ENCODE measurements at regions of chr20 and their contacts with region 1.

Region 1: DNA sequence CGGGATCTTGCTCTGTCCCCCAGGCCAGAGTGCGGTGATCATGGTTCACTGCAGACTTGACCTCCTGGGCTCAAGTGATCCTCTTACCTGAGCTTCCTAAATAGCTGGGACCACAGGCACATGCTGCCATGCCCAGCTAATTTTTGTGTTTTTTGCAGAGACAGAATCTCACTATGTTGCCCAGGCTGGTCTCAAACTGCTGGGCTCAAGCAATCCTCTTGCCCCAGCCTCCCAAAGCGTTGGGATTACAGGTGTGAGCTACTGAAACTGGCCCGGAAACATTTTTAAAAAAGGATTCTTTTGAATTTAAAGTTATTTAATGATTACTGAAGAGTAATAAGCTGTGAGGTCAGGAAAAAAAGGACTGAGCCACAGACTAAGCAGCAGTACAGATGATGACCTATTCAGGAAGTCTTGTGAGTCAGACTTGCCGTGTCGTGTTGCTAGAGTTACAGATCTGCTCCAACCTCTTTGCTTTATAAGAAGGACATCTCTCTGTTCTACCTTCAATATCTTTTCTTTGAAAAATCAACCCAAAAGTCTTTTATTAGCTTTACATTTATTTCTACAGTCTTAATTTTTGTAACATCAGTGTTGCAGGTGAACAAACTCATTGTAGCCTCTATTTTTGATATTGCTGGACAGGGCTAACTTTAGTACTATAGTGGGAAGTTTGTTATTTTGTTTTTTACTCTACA is 108.7 kb downstream of the NCOA3 start:
- DNase-seq: peak; percentile 67
- H3K4me3 Mint-ChIP-seq: no peak overlapping the region
- H3K27ac Mint-ChIP-seq: peak overlapping the region; percentile 72
- H3K4me1 Mint-ChIP-seq: peaks cover 39% of the 10 kb centered on the region
- H3K27me3 Mint-ChIP-seq: no peaks in the 10 kb centered on the region
- CTCF ChIP-seq: no peak

Region 2: DNA sequence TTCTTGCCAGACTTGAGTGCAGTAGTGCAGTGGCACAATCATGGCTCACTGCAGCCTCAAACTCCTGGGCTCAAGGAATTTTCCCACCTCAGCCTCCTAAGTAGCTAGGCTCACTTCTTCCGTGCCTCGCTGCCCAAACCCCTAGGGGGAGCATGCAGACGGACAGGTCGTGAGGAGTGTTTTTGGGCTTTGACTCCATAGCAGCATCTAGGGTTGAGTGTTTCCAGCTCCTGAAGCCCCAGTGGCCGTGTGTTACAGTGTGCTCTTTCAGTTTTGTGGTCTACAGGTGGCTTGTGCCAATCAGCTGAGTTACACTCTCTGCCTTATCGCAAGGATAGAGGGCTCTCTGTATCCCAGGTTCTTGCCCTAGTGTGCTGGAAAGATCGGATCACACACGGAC is 75.3 kb before region 1 on chr20:
- CTCF ChIA-PET with region 1: interaction called, 10 read pairs
- intact Hi-C with region 1: no loop called
- DNase-seq: no peak
- H3K4me3 Mint-ChIP-seq: no peak overlapping the region
- H3K27ac Mint-ChIP-seq: no peak overlapping the region
- H3K4me1 Mint-ChIP-seq: peaks cover 18% of the 10 kb centered on the region
- H3K27me3 Mint-ChIP-seq: no peaks in the 10 kb centered on the region
- CTCF ChIP-seq: no peak

Region 3: DNA sequence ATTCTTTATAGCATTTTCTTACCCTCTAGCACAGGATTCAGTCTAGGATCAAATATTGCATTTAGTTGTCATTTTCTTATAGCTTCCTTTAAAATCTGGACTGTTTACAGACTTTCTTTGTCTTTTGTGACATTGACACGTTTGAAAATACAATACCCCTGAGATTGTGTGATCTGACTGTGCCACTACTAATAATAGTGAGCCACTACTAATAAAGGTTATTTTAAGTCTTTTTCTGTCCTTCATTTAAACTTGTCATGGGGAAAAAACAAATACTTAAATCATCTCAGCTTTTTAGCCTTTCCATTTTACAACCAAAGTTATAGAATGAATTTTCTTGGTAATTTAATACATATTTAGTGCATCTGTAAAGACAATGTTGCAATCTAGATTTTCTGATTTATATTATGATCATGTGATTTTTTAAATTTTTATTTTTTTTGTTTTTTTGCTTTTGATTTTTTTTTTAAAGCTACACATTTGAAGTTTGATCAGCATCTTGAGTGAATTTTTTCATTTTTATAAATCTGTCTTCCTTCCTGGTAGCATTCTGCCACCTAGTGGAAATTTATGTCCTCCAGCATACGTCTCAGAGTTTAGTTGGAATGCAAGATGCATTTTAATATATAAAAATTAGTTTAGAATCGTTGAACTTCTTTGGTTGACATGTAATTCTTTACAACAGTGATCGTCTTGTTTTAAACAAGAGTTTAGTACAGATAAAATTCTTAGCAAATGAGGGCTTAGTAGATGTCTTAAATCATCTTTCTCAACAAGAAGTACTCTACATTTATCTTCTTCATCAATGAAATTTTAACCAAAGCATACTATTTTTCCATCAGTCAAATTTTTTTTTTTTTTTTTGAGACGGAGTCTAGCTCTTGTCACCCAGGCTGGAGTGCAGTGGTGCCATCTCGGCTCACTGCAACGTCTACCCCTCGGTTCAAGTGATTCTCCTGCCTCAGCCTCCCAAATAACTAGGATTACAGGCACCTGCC is 10.7 kb after region 1 on chr20:
- CTCF ChIA-PET with region 1: interaction called, 10 read pairs
- intact Hi-C with region 1: no loop called
- DNase-seq: peak; percentile 48
- H3K4me3 Mint-ChIP-seq: no peak overlapping the region
- H3K27ac Mint-ChIP-seq: peak overlapping the region; percentile 11
- H3K4me1 Mint-ChIP-seq: peaks cover 17% of the 10 kb centered on the region
- H3K27me3 Mint-ChIP-seq: no peaks in the 10 kb centered on the region
- CTCF ChIP-seq: peak; percentile 90